Activated CD8-positive, alpha-beta memory T cell treated with anti-CD3 and anti-CD28 coated beads, Interleukin-2, amount 10 ng/mL, durations not matched to agents 7 days and 5 days (primary cell): ENCODE measurements at regions of chr3 and their contacts with region 1.

Region 1: GRCh38 chr3:50245831-50246516 is 10.0 kb downstream of the GNAI2 start:
- DNase-seq: peak; percentile 96
- ATAC-seq: peak; percentile 80
- H3K4me3 Mint-ChIP-seq: peak overlapping the region; percentile 68
- H3K27ac Mint-ChIP-seq: peak overlapping the region; percentile 91
- H3K4me1 Mint-ChIP-seq: peaks cover 76% of the 10 kb centered on the region
- H3K27me3 Mint-ChIP-seq: no peaks in the 10 kb centered on the region

Region 2: GRCh38 chr3:50028336-50028735 is 217.6 kb before region 1 on chr3:
- CTCF ChIA-PET with region 1: no interaction called
- DNase-seq: no peak
- ATAC-seq: no peak
- H3K4me3 Mint-ChIP-seq: no peak overlapping the region
- H3K27ac Mint-ChIP-seq: no peak overlapping the region
- H3K4me1 Mint-ChIP-seq: no peaks in the 10 kb centered on the region
- H3K27me3 Mint-ChIP-seq: no peaks in the 10 kb centered on the region

Region 3: GRCh38 chr3:50192689-50193141 is 53.3 kb before region 1 on chr3:
- CTCF ChIA-PET with region 1: interaction called, 46 read pairs
- DNase-seq: peak; percentile 85
- ATAC-seq: peak; percentile 38
- H3K4me3 Mint-ChIP-seq: no peak overlapping the region
- H3K27ac Mint-ChIP-seq: no peak overlapping the region
- H3K4me1 Mint-ChIP-seq: peaks cover 10% of the 10 kb centered on the region
- H3K27me3 Mint-ChIP-seq: peaks cover 25% of the 10 kb centered on the region

Region 4: GRCh38 chr3:50221411-50222168 is 24.4 kb before region 1 on chr3:
- CTCF ChIA-PET with region 1: interaction called, 231 read pairs
- DNase-seq: no peak
- ATAC-seq: no peak
- H3K4me3 Mint-ChIP-seq: no peak overlapping the region
- H3K27ac Mint-ChIP-seq: peak overlapping the region; percentile 63
- H3K4me1 Mint-ChIP-seq: peaks cover 17% of the 10 kb centered on the region
- H3K27me3 Mint-ChIP-seq: peaks cover 14% of the 10 kb centered on the region

Region 5: DNA sequence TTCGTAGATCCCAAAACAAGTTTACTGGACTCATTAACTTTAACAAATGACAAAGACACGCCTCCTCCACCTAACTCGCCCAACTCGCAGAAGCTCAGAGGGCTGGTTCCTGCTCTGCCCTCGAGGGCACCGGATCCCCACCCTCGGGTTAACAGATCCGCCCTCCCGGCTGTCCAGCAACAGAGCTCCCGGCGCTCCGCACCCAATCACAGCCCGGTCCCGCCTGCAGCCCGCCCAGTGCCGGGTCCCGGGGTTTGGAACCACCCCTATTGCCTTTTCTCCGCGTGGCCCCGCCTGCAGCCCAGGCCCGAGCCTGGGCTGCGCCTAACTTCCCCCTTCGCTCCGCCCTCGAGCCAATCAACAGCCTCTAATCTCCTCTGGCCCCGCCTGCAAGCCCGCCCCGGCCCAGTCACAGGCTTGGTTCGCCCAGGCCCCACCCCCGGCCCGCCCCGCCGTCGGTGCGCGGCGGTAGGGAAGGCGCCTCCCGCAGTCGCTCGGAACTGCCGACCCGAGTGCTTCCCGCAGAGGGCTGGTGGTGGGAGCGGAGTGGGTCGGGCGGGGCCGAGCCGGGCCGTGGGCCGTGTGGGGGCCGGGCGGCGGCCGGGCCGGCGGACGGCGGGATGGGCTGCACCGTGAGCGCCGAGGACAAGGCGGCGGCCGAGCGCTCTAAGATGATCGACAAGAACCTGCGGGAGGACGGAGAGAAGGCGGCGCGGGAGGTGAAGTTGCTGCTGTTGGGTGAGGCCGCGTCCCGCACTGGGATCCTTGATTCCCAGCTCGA is 10.1 kb before region 1 on chr3 and contains the start of gene GNAI2:
- CTCF ChIA-PET with region 1: interaction called, 231 read pairs
- DNase-seq: peak; percentile 100
- ATAC-seq: peak; percentile 93
- H3K4me3 Mint-ChIP-seq: peak within 1 kb of the TSS; percentile 97
- H3K27ac Mint-ChIP-seq: peak within 1 kb of the TSS; percentile 94
- H3K4me1 Mint-ChIP-seq: peaks cover 38% of the 10 kb centered on the region
- H3K27me3 Mint-ChIP-seq: no peaks in the 10 kb centered on the region
- total RNA-seq, gene GNAI2: 450 to 509 TPM

Region 6: GRCh38 chr3:50260027-50260941 is 14.3 kb after region 1 on chr3:
- CTCF ChIA-PET with region 1: interaction called, 72 read pairs
- DNase-seq: peak; percentile 91
- ATAC-seq: peak; percentile 97
- H3K4me3 Mint-ChIP-seq: peak overlapping the region; percentile 47
- H3K27ac Mint-ChIP-seq: peak overlapping the region; percentile 32
- H3K4me1 Mint-ChIP-seq: peaks cover 7% of the 10 kb centered on the region
- H3K27me3 Mint-ChIP-seq: no peaks in the 10 kb centered on the region

Region 7: DNA sequence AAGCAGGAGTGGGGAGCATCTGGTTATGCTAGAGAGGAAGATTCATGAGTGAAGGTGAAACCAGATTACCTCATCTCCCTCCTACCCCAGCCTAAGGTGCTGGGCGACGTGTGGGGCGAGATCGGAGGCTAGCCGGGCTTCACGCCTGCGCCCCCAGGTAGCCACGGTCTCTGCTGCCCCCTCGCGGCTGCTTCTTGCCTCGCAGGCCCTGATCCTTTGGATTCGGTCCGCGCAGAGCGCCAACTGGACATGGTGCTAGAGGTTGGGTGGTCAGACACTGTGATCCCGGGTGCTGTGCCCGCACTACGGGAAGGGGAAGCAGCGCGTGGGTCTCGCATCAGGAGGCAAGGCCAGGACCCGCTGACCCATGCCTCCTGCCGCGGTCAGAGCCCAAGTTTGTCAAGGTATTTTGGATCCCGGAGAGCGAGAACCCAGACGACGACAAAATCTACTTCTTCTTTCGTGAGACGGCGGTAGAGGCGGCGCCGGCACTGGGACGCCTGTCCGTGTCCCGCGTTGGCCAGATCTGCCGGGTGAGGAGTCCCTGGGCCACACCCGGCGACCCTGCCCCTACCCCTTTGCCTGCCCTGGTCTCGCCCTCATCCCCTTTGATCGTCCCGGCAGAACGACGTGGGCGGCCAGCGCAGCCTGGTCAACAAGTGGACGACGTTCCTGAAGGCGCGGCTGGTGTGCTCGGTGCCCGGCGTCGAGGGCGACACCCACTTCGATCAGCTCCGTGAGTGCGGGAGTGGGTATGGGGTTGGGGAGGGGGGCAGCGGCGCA is 27.1 kb after region 1 on chr3:
- CTCF ChIA-PET with region 1: interaction called, 22 read pairs
- DNase-seq: peak; percentile 92
- ATAC-seq: peak; percentile 89
- H3K4me3 Mint-ChIP-seq: peak overlapping the region; percentile 58
- H3K27ac Mint-ChIP-seq: no peak overlapping the region
- H3K4me1 Mint-ChIP-seq: peaks cover 32% of the 10 kb centered on the region
- H3K27me3 Mint-ChIP-seq: peaks cover 54% of the 10 kb centered on the region

Region 8: GRCh38 chr3:50292159-50293078 is 46.4 kb after region 1 on chr3 and contains the start of gene IFRD2:
- CTCF ChIA-PET with region 1: interaction called, 12 read pairs
- DNase-seq: peak; percentile 98
- ATAC-seq: peak; percentile 98
- H3K4me3 Mint-ChIP-seq: peak within 1 kb of the TSS; percentile 79
- H3K27ac Mint-ChIP-seq: peak within 1 kb of the TSS; percentile 97
- H3K4me1 Mint-ChIP-seq: peaks cover 22% of the 10 kb centered on the region
- H3K27me3 Mint-ChIP-seq: no peaks in the 10 kb centered on the region
- total RNA-seq, gene IFRD2: 74.8 to 103 TPM